Activated T-helper 2 cell treated with anti-CD3 and anti-CD28 coated beads, Interferon-gamma antibody, Interleukin-2, Interleukin-4, amounts not matched to agents 10 μg/mL and 5 μg/mL and 100 μg/mL, durations not matched to agents 14 hours and 24 hours and 36 hours (primary cell): ENCODE measurements at regions of chr15 and their contacts with region 1.

Region 1: GRCh38 chr15:48877630-48878595 is at the start of gene EID1:
- DNase-seq: peak; percentile 95
- H3K4me3 Mint-ChIP-seq: peak within 1 kb of the TSS; percentile 95
- H3K27ac Mint-ChIP-seq: peak within 1 kb of the TSS; percentile 95
- H3K4me1 Mint-ChIP-seq: peaks cover 56% of the 10 kb centered on the region
- H3K27me3 Mint-ChIP-seq: no peaks in the 10 kb centered on the region
- total RNA-seq, gene EID1: 168 and 202 TPM in 2 replicates

Region 2: GRCh38 chr15:48861813-48862431 is 16.0 kb before region 1 on chr15:
- intact Hi-C with region 1: loop called (anchors 1 kb)
- DNase-seq: peak; percentile 20
- H3K4me3 Mint-ChIP-seq: no peak overlapping the region
- H3K27ac Mint-ChIP-seq: peak overlapping the region; percentile 28
- H3K4me1 Mint-ChIP-seq: peaks cover 19% of the 10 kb centered on the region
- H3K27me3 Mint-ChIP-seq: peaks cover 2% of the 10 kb centered on the region

Region 3: GRCh38 chr15:48925714-48926223 is 47.9 kb after region 1 on chr15:
- intact Hi-C with region 1: loop called (anchors 1 kb)
- DNase-seq: no peak
- H3K4me3 Mint-ChIP-seq: peak overlapping the region; percentile 30
- H3K27ac Mint-ChIP-seq: peak overlapping the region; percentile 97
- H3K4me1 Mint-ChIP-seq: peaks cover 74% of the 10 kb centered on the region
- H3K27me3 Mint-ChIP-seq: no peaks in the 10 kb centered on the region

Region 4: GRCh38 chr15:48965972-48966371 is 88.1 kb after region 1 on chr15:
- intact Hi-C with region 1: loop called (anchors 1 kb)
- DNase-seq: no peak
- H3K4me3 Mint-ChIP-seq: peak overlapping the region; percentile 16
- H3K27ac Mint-ChIP-seq: peak overlapping the region; percentile 97
- H3K4me1 Mint-ChIP-seq: peaks cover 72% of the 10 kb centered on the region
- H3K27me3 Mint-ChIP-seq: no peaks in the 10 kb centered on the region

Region 5: GRCh38 chr15:49046220-49047102 is 168.5 kb after region 1 on chr15 and contains the start of gene SECISBP2L:
- intact Hi-C with region 1: loop called (anchors 5 kb)
- DNase-seq: peak; percentile 88
- H3K4me3 Mint-ChIP-seq: peak within 1 kb of the TSS; percentile 97
- H3K27ac Mint-ChIP-seq: peak within 1 kb of the TSS; percentile 83
- H3K4me1 Mint-ChIP-seq: peaks cover 27% of the 10 kb centered on the region
- H3K27me3 Mint-ChIP-seq: no peaks in the 10 kb centered on the region
- total RNA-seq, gene SECISBP2L: 33.5 and 37.0 TPM in 2 replicates